CD8-positive, alpha-beta T cell (primary cell): ENCODE measurements at regions of chr17 and their contacts with region 1.

Region 1: DNA sequence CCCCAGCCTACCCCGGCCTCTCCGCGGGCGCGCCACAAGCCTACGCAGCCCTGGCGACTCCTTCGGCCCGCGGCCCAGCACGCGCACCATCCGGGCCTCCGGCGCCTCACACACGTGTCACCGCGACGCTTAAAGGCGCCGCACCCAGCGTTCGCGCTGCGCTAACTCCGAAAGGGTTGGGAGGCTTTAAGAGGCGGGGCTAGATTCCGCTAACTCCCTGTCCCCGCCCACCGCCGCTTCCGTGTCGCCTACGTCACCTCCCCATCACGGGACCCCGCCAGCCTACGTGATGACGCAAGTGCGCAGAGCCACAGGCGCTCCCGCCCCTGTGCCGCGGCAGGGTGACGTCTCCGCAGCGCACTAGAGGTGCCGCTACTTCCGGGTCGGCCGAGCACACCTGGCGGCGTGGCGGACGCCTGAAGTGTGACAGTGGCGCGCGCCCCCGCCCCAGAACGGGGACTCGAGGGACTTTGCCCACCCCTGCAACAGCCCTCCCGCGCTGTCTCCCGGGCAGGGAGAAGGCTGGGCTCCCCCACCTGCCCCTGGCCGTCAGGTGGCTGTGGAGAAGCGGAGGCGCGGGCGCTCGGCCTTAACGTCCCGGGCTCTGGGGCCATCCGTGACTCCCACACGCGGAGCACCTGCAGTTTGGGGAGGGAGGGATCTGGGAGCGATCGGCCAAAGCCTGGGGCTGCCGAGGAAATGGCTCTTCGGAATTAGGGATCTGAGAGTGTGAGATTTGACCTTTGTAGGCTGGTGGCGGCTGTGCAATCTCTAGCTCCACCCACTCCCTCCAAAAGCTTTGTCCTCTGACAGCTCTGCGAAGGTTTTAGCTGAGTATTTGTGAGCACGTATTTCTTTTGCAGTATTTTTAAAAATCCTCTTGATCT is at the start of gene USP36:
- DNase-seq: peak; percentile 99 to 100 (median 100)
- ATAC-seq: peak; percentile 84
- H3K4me3 ChIP-seq: peak within 1 kb of the TSS; percentile 70 to 86
- H3K4me3 Mint-ChIP-seq: peak within 1 kb of the TSS; percentile 99
- H3K27ac ChIP-seq: peak within 1 kb of the TSS; percentile 98
- H3K27ac Mint-ChIP-seq: peak within 1 kb of the TSS; percentile 97
- H3K4me1 ChIP-seq: peaks cover 32% of the 10 kb centered on the region
- H3K4me1 Mint-ChIP-seq: peaks cover 49% of the 10 kb centered on the region
- H3K27me3 ChIP-seq: no peaks in the 10 kb centered on the region
- H3K27me3 Mint-ChIP-seq: no peaks in the 10 kb centered on the region
- CTCF ChIP-seq: no peak
- total RNA-seq, gene USP36: 755 to 805 TPM

Region 2: DNA sequence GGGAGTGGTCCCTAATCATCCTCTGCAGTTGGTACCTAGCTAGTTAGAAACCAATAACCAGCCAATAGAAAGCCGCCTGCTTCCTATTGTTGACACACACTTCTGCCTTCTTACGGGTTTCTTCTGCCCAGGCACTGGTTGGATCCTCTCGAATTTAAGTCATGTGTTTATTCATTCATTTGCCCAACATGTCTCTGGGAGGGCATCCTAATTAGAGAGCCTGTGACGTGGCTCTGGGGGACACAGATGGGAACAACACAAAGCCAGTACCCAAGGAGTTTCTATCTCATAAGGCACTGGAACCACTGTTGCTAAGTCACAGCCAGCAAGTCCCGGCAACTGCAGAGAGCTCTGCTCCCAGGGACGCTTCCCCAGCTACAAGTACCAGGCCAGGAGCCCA is 1183.1 kb before region 1 on chr17:
- CTCF ChIA-PET with region 1: no interaction called
- POLR2A ChIA-PET with region 1: no interaction called
- intact Hi-C with region 1: no loop called
- DNase-seq: no peak
- ATAC-seq: no peak
- H3K4me3 ChIP-seq: no peak overlapping the region
- H3K4me3 Mint-ChIP-seq: no peak overlapping the region
- H3K27ac ChIP-seq: no peak overlapping the region
- H3K27ac Mint-ChIP-seq: no peak overlapping the region
- H3K4me1 ChIP-seq: no peaks in the 10 kb centered on the region
- H3K4me1 Mint-ChIP-seq: no peaks in the 10 kb centered on the region
- H3K27me3 ChIP-seq: no peaks in the 10 kb centered on the region
- H3K27me3 Mint-ChIP-seq: peaks cover 5% of the 10 kb centered on the region
- CTCF ChIP-seq: no peak

Region 3: GRCh38 chr17:77677211-77677610 is 1163.8 kb before region 1 on chr17:
- CTCF ChIA-PET with region 1: no interaction called
- POLR2A ChIA-PET with region 1: no interaction called
- intact Hi-C with region 1: no loop called
- DNase-seq: no peak
- ATAC-seq: no peak
- H3K4me3 ChIP-seq: no peak overlapping the region
- H3K4me3 Mint-ChIP-seq: no peak overlapping the region
- H3K27ac ChIP-seq: no peak overlapping the region
- H3K27ac Mint-ChIP-seq: no peak overlapping the region
- H3K4me1 ChIP-seq: no peaks in the 10 kb centered on the region
- H3K4me1 Mint-ChIP-seq: peaks cover 13% of the 10 kb centered on the region
- H3K27me3 ChIP-seq: no peaks in the 10 kb centered on the region
- H3K27me3 Mint-ChIP-seq: no peaks in the 10 kb centered on the region
- CTCF ChIP-seq: no peak

Region 4: DNA sequence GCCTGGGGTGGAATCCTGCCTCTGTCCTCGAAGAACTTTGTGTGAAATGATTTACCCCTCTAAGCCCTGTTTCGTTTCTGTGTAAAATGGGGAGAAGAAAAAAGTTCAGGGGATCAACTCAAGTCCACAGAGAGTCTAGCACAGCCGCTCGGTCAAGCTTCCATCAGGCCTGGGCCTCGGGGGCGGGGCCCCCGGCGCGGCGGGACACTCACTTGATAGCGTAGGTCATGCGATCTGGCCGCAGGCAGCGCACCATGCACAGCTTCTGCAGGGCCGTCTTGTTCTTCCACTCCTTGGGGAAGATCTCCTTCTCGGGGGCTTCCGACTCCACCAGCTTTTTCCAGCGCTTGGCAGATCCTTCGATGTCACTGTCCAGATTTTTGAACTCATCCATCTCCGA is 396.6 kb before region 1 on chr17:
- CTCF ChIA-PET with region 1: interaction called, 5 read pairs
- POLR2A ChIA-PET with region 1: no interaction called
- intact Hi-C with region 1: loop called in 1 of 2 experiments (anchors 2 kb)
- DNase-seq: no peak
- ATAC-seq: no peak
- H3K4me3 ChIP-seq: no peak overlapping the region
- H3K4me3 Mint-ChIP-seq: no peak overlapping the region
- H3K27ac ChIP-seq: no peak overlapping the region
- H3K27ac Mint-ChIP-seq: no peak overlapping the region
- H3K4me1 ChIP-seq: no peaks in the 10 kb centered on the region
- H3K4me1 Mint-ChIP-seq: no peaks in the 10 kb centered on the region
- H3K27me3 ChIP-seq: no peaks in the 10 kb centered on the region
- H3K27me3 Mint-ChIP-seq: no peaks in the 10 kb centered on the region
- CTCF ChIP-seq: no peak

Region 5: DNA sequence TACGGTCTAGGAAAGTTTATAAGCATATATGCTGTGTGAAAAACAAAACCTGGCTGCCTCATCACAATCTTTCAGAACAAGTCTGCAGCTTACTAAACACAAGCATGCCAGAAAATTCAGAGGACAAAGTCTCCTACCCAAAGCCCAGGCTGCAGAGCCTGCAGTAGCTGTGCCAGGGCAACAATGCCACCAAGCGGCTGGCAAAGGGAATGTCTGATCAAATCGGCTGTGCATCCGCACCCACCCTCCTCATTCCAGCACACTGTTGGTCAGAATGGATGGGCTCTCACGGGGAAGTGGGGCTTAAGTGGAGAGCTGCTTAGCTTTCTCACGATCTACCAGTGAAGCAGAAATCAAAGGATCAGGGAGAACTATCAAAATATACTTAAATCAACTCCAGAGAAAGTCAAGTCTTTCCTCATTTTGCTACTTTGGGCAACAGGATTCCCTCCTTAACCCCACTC is 132.4 kb before region 1 on chr17:
- CTCF ChIA-PET with region 1: interaction called, 12 read pairs
- POLR2A ChIA-PET with region 1: no interaction called
- intact Hi-C with region 1: no loop called
- DNase-seq: peak in 8 of 9 experiments; percentile 39 to 76 (median 60)
- ATAC-seq: peak; percentile 79
- H3K4me3 ChIP-seq: no peak overlapping the region
- H3K4me3 Mint-ChIP-seq: peak overlapping the region; percentile 33
- H3K27ac ChIP-seq: peak overlapping the region in 1 of 2 experiments; percentile 49
- H3K27ac Mint-ChIP-seq: peak overlapping the region; percentile 88
- H3K4me1 ChIP-seq: peaks cover 40% of the 10 kb centered on the region
- H3K4me1 Mint-ChIP-seq: peaks cover 55% of the 10 kb centered on the region
- H3K27me3 ChIP-seq: no peaks in the 10 kb centered on the region
- H3K27me3 Mint-ChIP-seq: no peaks in the 10 kb centered on the region
- CTCF ChIP-seq: peak; percentile 84

Region 6: GRCh38 chr17:78737332-78737731 is 103.6 kb before region 1 on chr17:
- CTCF ChIA-PET with region 1: no interaction called
- POLR2A ChIA-PET with region 1: no interaction called
- intact Hi-C with region 1: no loop called
- DNase-seq: peak in 1 of 9 experiments; percentile 54
- ATAC-seq: no peak
- H3K4me3 ChIP-seq: peak overlapping the region; percentile 63 to 72
- H3K4me3 Mint-ChIP-seq: peak overlapping the region; percentile 88
- H3K27ac ChIP-seq: peak overlapping the region; percentile 58 to 79
- H3K27ac Mint-ChIP-seq: peak overlapping the region; percentile 92
- H3K4me1 ChIP-seq: peaks cover 86% of the 10 kb centered on the region
- H3K4me1 Mint-ChIP-seq: peaks cover 88% of the 10 kb centered on the region
- H3K27me3 ChIP-seq: no peaks in the 10 kb centered on the region
- H3K27me3 Mint-ChIP-seq: no peaks in the 10 kb centered on the region
- CTCF ChIP-seq: no peak

Region 7: GRCh38 chr17:78781948-78782916 is 58.7 kb before region 1 on chr17 and contains the start of gene CYTH1:
- CTCF ChIA-PET with region 1: interaction called, 3 read pairs
- POLR2A ChIA-PET with region 1: interaction called, 3 read pairs
- intact Hi-C with region 1: loop called (anchors 1 kb)
- DNase-seq: peak; percentile 93 to 100 (median 98)
- ATAC-seq: peak; percentile 80
- H3K4me3 ChIP-seq: peak within 1 kb of the TSS; percentile 90 to 97
- H3K4me3 Mint-ChIP-seq: peak within 1 kb of the TSS; percentile 93
- H3K27ac ChIP-seq: peak within 1 kb of the TSS; percentile 86 to 93
- H3K27ac Mint-ChIP-seq: peak within 1 kb of the TSS; percentile 90
- H3K4me1 ChIP-seq: peaks cover 67% of the 10 kb centered on the region
- H3K4me1 Mint-ChIP-seq: peaks cover 55% of the 10 kb centered on the region
- H3K27me3 ChIP-seq: no peaks in the 10 kb centered on the region
- H3K27me3 Mint-ChIP-seq: no peaks in the 10 kb centered on the region
- CTCF ChIP-seq: no peak
- total RNA-seq, gene CYTH1: 475 to 490 TPM

Region 8: DNA sequence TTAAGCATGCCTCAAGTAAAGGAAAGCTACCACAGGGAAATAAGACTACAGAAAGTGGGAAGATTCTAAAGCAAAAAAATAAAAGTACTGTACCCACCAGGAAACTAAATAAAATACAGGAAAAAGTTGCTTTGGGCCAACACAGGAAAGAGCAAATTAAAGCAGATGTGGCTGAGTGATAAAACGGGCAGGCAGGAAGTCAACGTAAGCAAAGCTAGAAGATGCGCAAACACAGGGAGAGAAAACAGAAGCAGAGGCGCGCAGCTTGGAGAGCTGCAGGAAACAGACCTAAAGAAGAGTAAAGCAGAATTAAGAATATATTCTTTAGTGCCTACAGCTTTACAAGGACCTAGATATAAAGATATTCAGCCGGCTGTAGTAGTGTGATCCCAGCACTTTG is 22.0 kb before region 1 on chr17:
- CTCF ChIA-PET with region 1: interaction called, 3 read pairs
- POLR2A ChIA-PET with region 1: interaction called, 9 read pairs
- intact Hi-C with region 1: loop called (anchors 1 kb)
- DNase-seq: peak; percentile 35 to 90 (median 64)
- ATAC-seq: peak; percentile 47
- H3K4me3 ChIP-seq: peak overlapping the region in 1 of 2 experiments; percentile 21
- H3K4me3 Mint-ChIP-seq: peak overlapping the region; percentile 58
- H3K27ac ChIP-seq: peak overlapping the region; percentile 61 to 78
- H3K27ac Mint-ChIP-seq: peak overlapping the region; percentile 90
- H3K4me1 ChIP-seq: peaks cover 43% of the 10 kb centered on the region
- H3K4me1 Mint-ChIP-seq: peaks cover 68% of the 10 kb centered on the region
- H3K27me3 ChIP-seq: no peaks in the 10 kb centered on the region
- H3K27me3 Mint-ChIP-seq: no peaks in the 10 kb centered on the region
- CTCF ChIP-seq: no peak

Region 9: GRCh38 chr17:78933959-78934568 is 93.1 kb after region 1 on chr17:
- CTCF ChIA-PET with region 1: no interaction called
- POLR2A ChIA-PET with region 1: no interaction called
- intact Hi-C with region 1: no loop called
- DNase-seq: no peak
- ATAC-seq: no peak
- H3K4me3 ChIP-seq: no peak overlapping the region
- H3K4me3 Mint-ChIP-seq: no peak overlapping the region
- H3K27ac ChIP-seq: no peak overlapping the region
- H3K27ac Mint-ChIP-seq: no peak overlapping the region
- H3K4me1 ChIP-seq: no peaks in the 10 kb centered on the region
- H3K4me1 Mint-ChIP-seq: peaks cover 5% of the 10 kb centered on the region
- H3K27me3 ChIP-seq: no peaks in the 10 kb centered on the region
- H3K27me3 Mint-ChIP-seq: peaks cover 3% of the 10 kb centered on the region
- CTCF ChIP-seq: no peak